ENCODE measurements at regions of chr6 and their contacts with region 1.

Region 1: GRCh38 chr6:53492860-53493634 is 51.9 kb downstream of the GCLC start:
- DNase-seq: peak; percentile 31
- CTCF ChIP-seq: peak; percentile 68

Region 2: DNA sequence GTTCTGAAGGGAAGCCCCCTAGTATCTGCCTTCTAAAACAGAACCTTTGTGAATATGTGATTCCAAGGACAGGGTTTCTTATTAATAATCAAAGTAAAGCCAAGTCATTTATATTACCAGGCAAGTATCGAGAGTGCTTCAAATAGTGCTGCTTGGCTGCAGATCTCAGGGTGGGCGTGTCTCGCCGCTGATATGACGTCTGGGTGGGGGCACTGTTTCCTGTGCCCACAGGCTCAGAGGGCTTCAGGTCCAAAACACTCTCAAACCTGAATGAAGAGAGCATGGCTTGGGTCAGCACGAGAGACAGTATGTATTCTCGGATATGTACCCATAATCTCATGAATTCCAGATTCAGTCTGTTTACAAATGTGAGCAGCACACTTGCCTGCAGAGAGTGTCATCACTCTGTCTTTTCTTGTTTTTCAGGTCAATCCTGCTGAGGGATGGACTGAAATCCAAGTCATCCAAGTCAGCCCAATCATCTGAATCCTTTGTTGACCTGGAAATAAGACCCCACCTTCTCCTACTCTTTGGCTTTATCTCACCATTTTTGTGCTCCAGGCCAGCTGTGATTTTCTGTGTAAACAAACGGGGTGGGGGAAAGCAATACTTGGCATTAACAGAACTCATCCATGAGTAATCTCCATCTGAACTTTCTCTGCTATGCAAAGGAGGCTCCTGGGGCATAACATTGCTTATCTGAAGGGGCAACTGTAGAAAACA is 481.2 kb before region 1 on chr6:
- CTCF ChIA-PET with region 1: no interaction called
- POLR2A ChIA-PET with region 1: no interaction called
- DNase-seq: no peak
- CTCF ChIP-seq: no peak

Region 3: GRCh38 chr6:53504512-53504911 is 11.5 kb after region 1 on chr6:
- CTCF ChIA-PET with region 1: interaction called, 12 read pairs
- POLR2A ChIA-PET with region 1: no interaction called
- DNase-seq: no peak
- CTCF ChIP-seq: no peak

Measured in GM10248 (cell line).